ENCODE measurements at regions of chr5 and their contacts with region 1.

Region 1: DNA sequence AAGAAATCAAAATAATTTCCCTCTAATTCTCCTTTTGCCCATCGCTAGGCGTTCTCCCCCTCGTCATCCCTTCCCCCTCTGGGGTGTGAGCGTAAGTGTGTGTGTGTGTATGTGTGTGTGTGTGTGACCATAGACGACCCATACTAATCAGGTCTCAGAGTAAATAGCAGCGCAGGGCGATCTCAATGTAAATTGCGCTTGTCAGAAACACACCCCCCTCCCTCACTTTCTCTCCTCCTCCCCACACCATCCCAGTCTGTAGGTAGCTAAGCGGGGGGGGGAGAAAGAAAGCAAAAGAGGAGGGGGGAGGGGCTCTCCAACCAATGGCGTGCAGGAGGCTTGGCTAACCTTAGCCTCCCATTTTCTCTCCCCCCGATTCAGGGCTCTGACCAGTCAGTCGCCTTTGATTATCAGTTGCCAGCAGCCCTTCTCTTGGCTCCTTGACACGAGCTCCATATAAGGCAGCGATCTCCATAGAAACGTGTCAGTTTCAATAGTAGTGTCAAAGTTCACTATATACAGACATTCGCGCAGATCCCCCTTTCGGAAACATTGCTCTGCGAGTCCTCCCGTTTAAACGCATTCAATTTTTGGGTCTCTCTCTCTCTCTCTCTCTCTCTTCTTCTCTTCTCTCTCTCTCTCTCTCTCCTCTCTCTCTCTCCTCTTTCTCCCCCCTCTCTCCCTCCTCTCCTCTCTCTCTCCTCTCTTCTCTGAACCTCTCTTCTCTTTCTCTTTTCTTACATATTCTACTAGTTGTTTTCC is at the start of gene NR2F1:
- DNase-seq: no peak
- ATAC-seq: peak; percentile 56
- H3K4me3 ChIP-seq: peak within 1 kb of the TSS; percentile 68 to 71
- H3K27ac ChIP-seq: peak within 1 kb of the TSS; percentile 94
- H3K4me1 ChIP-seq: peaks cover 16% of the 10 kb centered on the region
- H3K27me3 ChIP-seq: no peaks in the 10 kb centered on the region
- CTCF ChIP-seq: no peak
- total RNA-seq, gene NR2F1: 49.5 TPM

Region 2: GRCh38 chr5:91928754-91929521 is 1653.9 kb before region 1 on chr5:
- CTCF ChIA-PET with region 1: interaction called, 12 read pairs
- POLR2A ChIA-PET with region 1: no interaction called
- in situ Hi-C with region 1: no loop called
- intact Hi-C with region 1: no loop called
- DNase-seq: peak; percentile 38
- ATAC-seq: peak; percentile 72; the same call in 1 of the 2 replicates
- H3K4me3 ChIP-seq: no peak overlapping the region
- H3K27ac ChIP-seq: peak overlapping the region; percentile 64; the same call in 1 of the 2 replicates
- H3K4me1 ChIP-seq: no peaks in the 10 kb centered on the region
- H3K27me3 ChIP-seq: no peaks in the 10 kb centered on the region
- CTCF ChIP-seq: peak; percentile 58; the same call in 1 of the 2 replicates

Region 3: DNA sequence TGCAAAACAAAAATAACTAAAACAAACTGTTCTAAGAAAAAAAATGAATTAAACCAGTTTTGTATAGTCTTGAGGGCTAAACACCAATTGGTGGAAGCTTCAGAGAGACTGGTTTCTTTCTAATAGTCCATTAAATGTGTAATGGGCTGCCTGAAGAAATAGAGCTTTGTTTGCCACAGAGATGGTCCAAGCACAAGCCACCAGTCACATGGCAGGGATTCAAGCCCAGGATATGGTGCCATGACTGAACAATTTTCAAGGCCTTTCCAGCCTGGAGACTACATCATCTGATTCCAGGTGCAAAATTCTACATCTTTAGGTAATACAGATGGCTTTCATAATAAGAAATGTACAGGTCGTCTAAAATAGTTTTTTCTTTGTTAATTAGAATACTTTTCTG is 357.1 kb before region 1 on chr5:
- CTCF ChIA-PET with region 1: no interaction called
- POLR2A ChIA-PET with region 1: interaction called, 16 read pairs
- in situ Hi-C with region 1: no loop called
- intact Hi-C with region 1: no loop called
- DNase-seq: no peak
- ATAC-seq: no peak
- H3K4me3 ChIP-seq: no peak overlapping the region
- H3K27ac ChIP-seq: no peak overlapping the region
- H3K4me1 ChIP-seq: no peaks in the 10 kb centered on the region
- H3K27me3 ChIP-seq: no peaks in the 10 kb centered on the region
- CTCF ChIP-seq: no peak

Region 4: GRCh38 chr5:93433392-93433791 is 149.5 kb before region 1 on chr5:
- CTCF ChIA-PET with region 1: no interaction called
- POLR2A ChIA-PET with region 1: no interaction called
- in situ Hi-C with region 1: no loop called
- intact Hi-C with region 1: no loop called
- DNase-seq: peak; percentile 70
- ATAC-seq: no peak
- H3K4me3 ChIP-seq: no peak overlapping the region
- H3K27ac ChIP-seq: no peak overlapping the region
- H3K4me1 ChIP-seq: no peaks in the 10 kb centered on the region
- H3K27me3 ChIP-seq: no peaks in the 10 kb centered on the region
- CTCF ChIP-seq: no peak

Region 5: GRCh38 chr5:93607367-93608258 is 24.8 kb after region 1 on chr5:
- CTCF ChIA-PET with region 1: no interaction called
- POLR2A ChIA-PET with region 1: interaction called, 14 read pairs
- in situ Hi-C with region 1: no loop called
- intact Hi-C with region 1: no loop called
- DNase-seq: no peak
- ATAC-seq: peak; percentile 86
- H3K4me3 ChIP-seq: peak overlapping the region; percentile 30 to 68
- H3K27ac ChIP-seq: peak overlapping the region; percentile 39
- H3K4me1 ChIP-seq: peaks cover 13% of the 10 kb centered on the region
- H3K27me3 ChIP-seq: peaks cover 35% of the 10 kb centered on the region
- CTCF ChIP-seq: peak; percentile 86

Region 6: GRCh38 chr5:93746406-93747056 is 163.7 kb after region 1 on chr5:
- CTCF ChIA-PET with region 1: no interaction called
- POLR2A ChIA-PET with region 1: no interaction called
- in situ Hi-C with region 1: no loop called
- intact Hi-C with region 1: no loop called
- DNase-seq: peak; percentile 5
- ATAC-seq: no peak
- H3K4me3 ChIP-seq: no peak overlapping the region
- H3K27ac ChIP-seq: no peak overlapping the region
- H3K4me1 ChIP-seq: no peaks in the 10 kb centered on the region
- H3K27me3 ChIP-seq: no peaks in the 10 kb centered on the region
- CTCF ChIP-seq: no peak